ENCODE measurements at regions of chr2 and their contacts with region 1.

Region 1: GRCh38 chr2:28390241-28390745 is 2.4 kb upstream of the FOSL2 start:
- DNase-seq: no peak
- H3K4me3 ChIP-seq: peak overlapping the region; percentile 51
- H3K27me3 ChIP-seq: no peaks in the 10 kb centered on the region
- CTCF ChIP-seq: no peak

Region 2: DNA sequence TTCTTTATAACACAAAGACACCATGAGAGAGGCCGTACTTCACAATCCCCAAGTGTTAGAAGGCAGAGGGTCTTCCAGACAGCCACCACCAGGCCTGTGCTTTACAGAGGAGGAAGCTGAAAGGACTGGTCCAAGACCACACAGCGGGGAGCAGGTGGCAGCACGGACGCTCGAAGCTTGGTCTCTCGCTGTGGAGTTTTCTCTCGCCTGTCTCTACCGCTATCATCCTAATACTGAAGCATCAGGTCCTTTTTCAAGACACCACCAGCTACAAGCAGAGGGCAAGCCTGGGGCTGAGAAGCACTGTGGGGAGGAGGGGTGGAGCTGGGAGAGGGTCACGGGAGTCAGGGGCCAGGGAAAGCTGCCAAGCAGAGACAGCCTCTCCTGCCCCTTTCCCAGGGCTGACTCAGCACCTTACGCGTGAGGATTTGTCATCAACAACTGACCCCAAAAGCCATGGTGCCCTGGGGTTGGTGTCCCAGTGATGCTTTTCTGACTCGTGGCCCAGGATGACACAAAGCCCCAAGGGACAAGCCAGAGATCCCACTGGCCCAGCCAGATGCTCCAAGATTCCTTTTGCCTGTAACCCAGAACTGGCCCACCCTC is 29.5 kb before region 1 on chr2:
- CTCF ChIA-PET with region 1: interaction called, 3 read pairs
- POLR2A ChIA-PET with region 1: interaction called, 14 read pairs
- DNase-seq: no peak
- H3K4me3 ChIP-seq: no peak overlapping the region
- H3K27me3 ChIP-seq: no peaks in the 10 kb centered on the region
- CTCF ChIP-seq: no peak

Region 3: GRCh38 chr2:28406276-28407096 is 16.2 kb after region 1 on chr2:
- CTCF ChIA-PET with region 1: no interaction called
- POLR2A ChIA-PET with region 1: no interaction called
- DNase-seq: no peak
- H3K4me3 ChIP-seq: no peak overlapping the region
- H3K27me3 ChIP-seq: no peaks in the 10 kb centered on the region
- CTCF ChIP-seq: no peak